Activated B cell treated with CpG ODN at 0.5 μM for 24 hours (primary cell): ENCODE measurements at regions of chr20 and their contacts with region 1.

Region 1: DNA sequence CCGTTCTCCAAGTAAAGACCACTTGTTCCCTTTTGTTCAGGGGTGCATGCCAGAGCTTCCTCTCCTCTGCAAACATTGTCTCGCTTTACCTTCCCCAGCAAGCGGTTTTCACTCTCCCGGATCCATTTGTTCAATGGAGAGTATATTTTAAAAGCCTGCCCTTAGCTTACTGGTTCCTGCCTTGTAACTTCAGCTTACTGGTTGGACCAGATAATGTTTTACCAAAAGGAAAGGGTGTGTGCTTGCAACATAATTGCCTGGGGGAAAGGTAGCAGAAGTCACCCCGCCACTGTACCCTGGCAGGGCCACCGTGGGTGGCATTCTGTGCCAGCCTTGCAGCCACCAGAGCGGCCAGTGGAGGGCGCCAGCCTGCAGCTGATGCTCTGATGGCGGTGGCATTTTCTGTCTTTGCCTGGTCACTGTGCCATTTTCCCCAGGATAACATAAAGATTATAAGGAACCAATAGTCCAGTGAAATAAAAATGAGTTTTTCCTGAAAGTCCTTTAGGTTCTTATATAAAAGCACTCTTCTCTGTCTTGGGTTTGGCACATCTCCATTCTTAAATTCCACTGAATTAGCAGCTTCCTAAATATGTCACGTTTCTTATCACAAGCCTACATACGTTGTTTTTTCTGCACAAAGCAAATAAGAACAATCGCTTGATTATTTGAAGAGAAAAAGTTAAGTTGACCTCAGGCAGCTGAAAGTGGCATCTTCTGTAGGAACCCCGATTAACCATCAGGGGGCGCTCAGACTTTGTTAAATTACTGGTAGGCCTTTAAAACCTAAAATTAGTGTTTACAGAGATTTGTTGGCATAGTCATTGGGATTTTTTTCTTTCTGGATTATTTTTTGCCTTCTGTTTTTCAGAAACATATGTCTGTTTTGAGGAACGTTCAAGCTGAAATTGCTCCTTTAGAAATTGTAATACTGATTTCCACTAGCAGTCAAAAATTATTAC is 67.4 kb upstream of the XRN2 start:
- DNase-seq: no peak
- ATAC-seq: peak; percentile 58
- H3K4me3 Mint-ChIP-seq: no peak overlapping the region
- H3K27ac Mint-ChIP-seq: no peak overlapping the region
- H3K4me1 Mint-ChIP-seq: peaks cover 3% of the 10 kb centered on the region
- H3K27me3 Mint-ChIP-seq: no peaks in the 10 kb centered on the region
- CTCF ChIP-seq: peak; percentile 92

Region 2: DNA sequence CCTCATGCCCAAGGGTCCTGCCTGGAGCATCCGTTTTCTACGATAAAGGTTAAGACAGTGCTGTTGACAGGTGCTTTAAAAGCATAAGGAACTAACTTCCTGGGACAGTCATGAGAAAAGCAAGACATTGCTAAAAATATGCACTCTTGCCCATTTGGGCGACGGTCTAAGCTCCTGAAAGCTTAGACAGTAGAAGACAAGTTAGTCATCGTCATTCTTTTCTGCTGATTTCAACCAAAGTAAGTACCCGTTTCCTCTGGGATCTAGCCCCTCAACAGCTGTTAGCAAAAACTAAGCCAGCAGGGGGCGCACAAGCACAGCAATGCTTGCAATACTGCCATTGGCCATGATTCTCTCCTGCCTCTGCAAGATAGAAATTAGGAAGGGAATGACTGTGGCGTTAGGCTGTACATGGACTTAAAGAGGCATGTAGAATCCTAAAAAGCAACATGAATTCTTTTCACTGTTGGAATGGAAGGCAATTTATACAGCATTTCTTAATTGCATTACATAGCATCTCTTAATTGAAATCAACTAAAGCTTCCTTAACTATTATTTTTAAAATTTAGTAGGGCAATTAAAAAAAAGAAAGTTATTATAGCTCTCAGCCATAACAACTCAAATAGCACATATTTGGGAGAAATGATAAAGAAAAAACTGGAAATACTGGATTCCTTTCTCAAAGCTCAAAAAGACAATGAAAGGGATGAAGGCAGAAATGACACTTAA is 375.5 kb before region 1 on chr20:
- CTCF ChIA-PET with region 1: interaction called, 5 read pairs
- POLR2A ChIA-PET with region 1: no interaction called
- intact Hi-C with region 1: loop called (anchors 1 kb)
- DNase-seq: peak; percentile 60
- ATAC-seq: peak; percentile 21
- H3K4me3 Mint-ChIP-seq: no peak overlapping the region
- H3K27ac Mint-ChIP-seq: no peak overlapping the region
- H3K4me1 Mint-ChIP-seq: no peaks in the 10 kb centered on the region
- H3K27me3 Mint-ChIP-seq: peaks cover 25% of the 10 kb centered on the region
- CTCF ChIP-seq: no peak

Region 3: GRCh38 chr20:21118111-21118510 is 117.7 kb before region 1 on chr20:
- CTCF ChIA-PET with region 1: no interaction called
- POLR2A ChIA-PET with region 1: no interaction called
- intact Hi-C with region 1: no loop called
- DNase-seq: no peak
- ATAC-seq: no peak
- H3K4me3 Mint-ChIP-seq: no peak overlapping the region
- H3K27ac Mint-ChIP-seq: no peak overlapping the region
- H3K4me1 Mint-ChIP-seq: no peaks in the 10 kb centered on the region
- H3K27me3 Mint-ChIP-seq: peaks cover 31% of the 10 kb centered on the region
- CTCF ChIP-seq: no peak

Region 4: DNA sequence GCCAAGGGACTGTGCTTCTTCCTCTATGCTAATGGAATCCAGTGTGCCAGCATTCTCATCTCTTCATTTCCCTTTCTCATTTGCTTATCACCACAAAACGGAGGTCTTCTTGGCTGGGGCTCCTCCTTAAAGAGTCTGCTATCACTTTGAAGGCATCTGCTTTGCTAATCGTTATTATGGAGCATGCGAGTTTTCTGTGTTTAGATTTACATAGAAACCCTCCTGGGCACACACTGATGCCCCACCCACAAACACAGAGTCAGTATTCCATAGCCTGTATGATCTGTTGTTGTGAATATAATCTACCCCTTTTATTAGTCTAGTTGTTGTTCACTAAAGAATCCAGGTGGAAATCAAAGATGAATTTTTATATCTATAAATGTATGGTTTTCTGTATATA is 16.1 kb before region 1 on chr20:
- CTCF ChIA-PET with region 1: interaction called, 10 read pairs
- POLR2A ChIA-PET with region 1: no interaction called
- intact Hi-C with region 1: no loop called
- DNase-seq: no peak
- ATAC-seq: no peak
- H3K4me3 Mint-ChIP-seq: no peak overlapping the region
- H3K27ac Mint-ChIP-seq: no peak overlapping the region
- H3K4me1 Mint-ChIP-seq: no peaks in the 10 kb centered on the region
- H3K27me3 Mint-ChIP-seq: no peaks in the 10 kb centered on the region
- CTCF ChIP-seq: no peak

Region 5: GRCh38 chr20:21246161-21246560 is 10.4 kb after region 1 on chr20:
- CTCF ChIA-PET with region 1: interaction called, 11 read pairs
- POLR2A ChIA-PET with region 1: no interaction called
- intact Hi-C with region 1: no loop called
- DNase-seq: no peak
- ATAC-seq: no peak
- H3K4me3 Mint-ChIP-seq: no peak overlapping the region
- H3K27ac Mint-ChIP-seq: no peak overlapping the region
- H3K4me1 Mint-ChIP-seq: no peaks in the 10 kb centered on the region
- H3K27me3 Mint-ChIP-seq: no peaks in the 10 kb centered on the region
- CTCF ChIP-seq: no peak

Region 6: GRCh38 chr20:21430020-21430419 is 194.3 kb after region 1 on chr20:
- CTCF ChIA-PET with region 1: no interaction called
- POLR2A ChIA-PET with region 1: no interaction called
- intact Hi-C with region 1: no loop called
- DNase-seq: no peak
- ATAC-seq: no peak
- H3K4me3 Mint-ChIP-seq: no peak overlapping the region
- H3K27ac Mint-ChIP-seq: no peak overlapping the region
- H3K4me1 Mint-ChIP-seq: no peaks in the 10 kb centered on the region
- H3K27me3 Mint-ChIP-seq: peaks cover 22% of the 10 kb centered on the region
- CTCF ChIP-seq: no peak

Region 7: DNA sequence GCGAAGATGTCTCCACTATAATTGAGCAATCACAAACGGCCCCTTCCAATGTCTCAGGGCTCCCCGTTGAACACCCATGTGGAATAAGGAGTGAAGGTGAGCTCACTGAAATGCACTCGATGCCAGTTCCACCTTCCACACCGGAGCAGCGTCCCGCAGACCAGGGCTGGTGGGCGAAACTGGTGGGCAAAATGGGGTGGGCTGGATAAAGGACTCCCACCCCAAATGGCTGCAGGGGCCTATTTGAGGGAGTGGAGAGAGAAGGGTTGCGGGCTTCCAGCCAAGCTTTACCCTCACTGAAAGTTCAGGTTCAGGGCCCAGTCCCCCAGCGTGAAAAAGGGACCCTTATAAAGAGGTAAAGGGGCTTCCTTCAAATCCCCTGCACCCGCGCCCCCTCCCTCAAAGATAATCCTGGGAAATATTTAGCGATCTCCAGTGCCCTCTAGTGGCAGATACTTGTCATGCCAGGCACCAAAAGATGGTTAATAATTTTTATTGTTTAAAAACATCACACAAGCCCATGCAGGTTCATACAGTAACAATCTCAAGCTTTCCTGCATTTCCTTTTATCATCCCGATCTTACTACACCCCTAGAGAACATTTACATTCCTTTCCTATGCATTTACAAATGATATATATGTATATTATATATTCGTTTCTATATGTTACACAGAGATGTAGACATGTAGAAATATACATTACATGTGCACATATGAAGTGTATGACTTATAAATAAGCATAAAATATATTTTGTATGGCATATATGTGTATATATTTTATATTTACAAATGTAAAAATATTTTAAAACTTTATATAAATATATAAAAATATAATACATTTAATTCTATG is 336.3 kb after region 1 on chr20:
- CTCF ChIA-PET with region 1: interaction called, 23 read pairs
- POLR2A ChIA-PET with region 1: no interaction called
- intact Hi-C with region 1: loop called (anchors 1 kb)
- DNase-seq: no peak
- ATAC-seq: no peak
- H3K4me3 Mint-ChIP-seq: no peak overlapping the region
- H3K27ac Mint-ChIP-seq: no peak overlapping the region
- H3K4me1 Mint-ChIP-seq: no peaks in the 10 kb centered on the region
- H3K27me3 Mint-ChIP-seq: peaks cover 21% of the 10 kb centered on the region
- CTCF ChIP-seq: peak; percentile 98